ENCODE measurements at regions of chr15 and their contacts with region 1.

Region 1: DNA sequence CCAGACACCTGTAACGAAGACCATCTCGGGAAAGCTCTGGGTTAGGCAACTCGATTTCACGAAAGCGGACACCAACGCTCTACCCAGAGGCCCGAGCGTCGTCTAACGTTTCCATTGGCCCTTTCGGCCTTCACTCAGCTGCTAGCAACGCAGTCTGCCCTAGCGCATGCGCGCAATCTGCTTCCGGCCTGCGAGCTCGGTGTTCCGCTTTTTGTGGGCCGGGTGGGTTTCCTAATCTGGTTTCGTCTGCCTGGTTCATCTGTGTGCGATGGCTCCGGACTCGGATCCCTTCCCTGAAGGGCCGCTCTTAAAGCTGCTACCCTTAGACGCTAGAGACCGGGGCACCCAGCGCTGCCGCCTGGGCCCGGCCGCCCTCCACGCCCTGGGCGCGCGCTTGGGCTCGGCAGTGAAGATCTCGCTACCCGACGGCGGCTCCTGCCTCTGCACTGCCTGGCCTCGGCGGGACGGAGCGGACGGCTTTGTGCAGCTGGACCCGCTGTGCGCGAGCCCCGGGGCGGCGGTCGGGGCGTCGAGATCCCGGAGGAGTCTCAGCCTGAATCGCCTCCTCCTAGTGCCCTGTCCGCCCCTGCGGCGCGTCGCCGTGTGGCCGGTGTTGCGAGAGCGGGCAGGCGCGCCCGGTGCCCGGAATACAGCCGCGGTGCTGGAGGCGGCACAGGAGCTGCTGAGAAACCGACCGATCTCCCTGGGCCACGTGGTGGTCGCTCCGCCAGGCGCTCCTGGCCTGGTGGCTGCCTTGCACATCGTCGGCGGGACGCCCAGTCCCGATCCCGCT is 24.0 kb upstream of the GATM start:
- DNase-seq: peak; percentile 94 to 99 (median 96)
- ATAC-seq: peak; percentile 93
- H3K4me3 ChIP-seq: peak overlapping the region; percentile 48 to 75
- H3K4me3 Mint-ChIP-seq: peak overlapping the region; percentile 93
- H3K27ac ChIP-seq: peak overlapping the region; percentile 75 to 86
- H3K27ac Mint-ChIP-seq: peak overlapping the region; percentile 96
- H3K4me1 ChIP-seq: peaks cover 22% of the 10 kb centered on the region
- H3K4me1 Mint-ChIP-seq: peaks cover 42% of the 10 kb centered on the region
- H3K27me3 ChIP-seq: no peaks in the 10 kb centered on the region
- H3K27me3 Mint-ChIP-seq: no peaks in the 10 kb centered on the region
- CTCF ChIP-seq: no peak

Region 2: GRCh38 chr15:44426975-44427755 is 975.2 kb before region 1 on chr15 and contains the start of gene CTDSPL2:
- CTCF ChIA-PET with region 1: no interaction called
- POLR2A ChIA-PET with region 1: no interaction called
- intact Hi-C with region 1: loop called (anchors 10 kb)
- DNase-seq: peak; percentile 88 to 97 (median 93)
- ATAC-seq: peak; percentile 95
- H3K4me3 ChIP-seq: peak within 1 kb of the TSS; percentile 61 to 83
- H3K4me3 Mint-ChIP-seq: peak within 1 kb of the TSS; percentile 98
- H3K27ac ChIP-seq: peak within 1 kb of the TSS; percentile 86
- H3K27ac Mint-ChIP-seq: peak within 1 kb of the TSS; percentile 98
- H3K4me1 ChIP-seq: peaks cover 25% of the 10 kb centered on the region
- H3K4me1 Mint-ChIP-seq: peaks cover 46% of the 10 kb centered on the region
- H3K27me3 ChIP-seq: no peaks in the 10 kb centered on the region
- H3K27me3 Mint-ChIP-seq: no peaks in the 10 kb centered on the region
- CTCF ChIP-seq: no peak
- total RNA-seq, gene CTDSPL2: 103 to 104 TPM

Region 3: DNA sequence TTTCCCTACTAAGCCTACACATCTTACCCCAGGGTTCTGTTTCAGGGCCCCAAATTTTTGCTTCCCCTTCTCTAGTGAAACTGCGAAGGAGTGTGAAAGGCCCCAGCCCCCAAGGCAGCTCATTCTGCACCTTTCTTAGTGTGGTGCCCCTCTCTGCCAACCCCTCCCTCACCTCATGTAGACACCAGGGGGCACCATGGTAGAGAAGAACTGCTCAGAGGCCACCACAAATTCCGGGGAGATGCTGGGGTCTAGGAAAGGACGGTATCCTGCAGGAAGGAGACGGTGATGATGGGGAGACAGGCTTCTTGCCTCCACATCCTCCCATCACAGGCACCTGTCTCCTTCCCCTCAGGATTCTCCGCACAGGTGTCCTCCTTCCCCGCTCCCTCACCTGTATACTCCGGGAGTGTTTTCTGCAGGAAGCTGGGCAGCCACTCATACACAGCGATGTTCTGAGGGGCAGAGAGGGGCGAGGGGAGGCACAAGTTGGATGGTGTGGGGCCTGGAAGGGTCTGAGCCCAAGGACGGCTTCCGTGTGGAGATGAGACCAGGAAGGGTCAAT is 292.0 kb before region 1 on chr15:
- CTCF ChIA-PET with region 1: no interaction called
- POLR2A ChIA-PET with region 1: no interaction called
- intact Hi-C with region 1: no loop called
- DNase-seq: no peak
- ATAC-seq: no peak
- H3K4me3 ChIP-seq: no peak overlapping the region
- H3K4me3 Mint-ChIP-seq: no peak overlapping the region
- H3K27ac ChIP-seq: no peak overlapping the region
- H3K27ac Mint-ChIP-seq: no peak overlapping the region
- H3K4me1 ChIP-seq: peaks cover 31% of the 10 kb centered on the region
- H3K4me1 Mint-ChIP-seq: peaks cover 28% of the 10 kb centered on the region
- H3K27me3 ChIP-seq: peaks cover 22 to 27% of the 10 kb centered on the region in 2 experiments
- H3K27me3 Mint-ChIP-seq: peaks cover 62% of the 10 kb centered on the region
- CTCF ChIP-seq: no peak

Region 4: DNA sequence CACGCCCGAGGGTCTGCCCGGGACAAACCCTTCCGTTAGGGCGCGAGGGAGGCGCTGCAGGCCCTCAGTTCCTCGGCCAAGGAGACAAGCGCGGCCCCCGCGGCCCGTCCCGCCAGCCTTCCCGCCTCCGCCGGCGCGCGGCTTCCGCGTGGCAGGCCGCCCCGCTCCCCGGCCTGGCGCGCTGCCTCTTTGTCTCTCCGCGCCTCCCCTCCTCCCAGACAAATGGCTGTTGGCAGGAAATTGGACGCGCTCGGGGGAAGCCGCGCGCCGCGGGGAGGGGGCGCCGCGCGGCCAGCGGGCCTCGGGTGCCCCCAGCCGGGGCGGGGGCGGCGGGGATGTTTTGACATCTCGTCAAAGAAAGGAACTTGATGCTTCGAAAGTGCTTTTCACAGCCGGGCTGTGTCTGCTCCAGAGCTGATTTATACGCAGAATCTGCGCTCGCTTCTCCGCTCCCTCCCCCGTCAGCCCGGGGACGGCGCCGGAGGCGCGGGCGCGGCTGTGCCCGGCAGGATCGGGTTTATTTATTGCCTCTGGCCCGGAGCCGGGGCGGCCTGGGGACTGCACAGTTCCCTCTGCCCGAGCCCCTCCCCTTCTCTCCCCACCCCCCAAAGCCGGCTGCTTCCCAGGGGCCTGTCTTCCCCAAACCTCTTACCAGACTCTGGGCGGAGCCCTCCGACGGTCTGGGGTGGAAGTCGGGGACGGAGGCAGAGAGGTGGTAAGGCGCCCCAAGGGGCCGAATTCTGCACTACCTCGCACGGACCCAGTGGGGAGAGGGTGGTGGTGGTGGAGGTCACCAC is 235.3 kb before region 1 on chr15:
- CTCF ChIA-PET with region 1: interaction called, 52 read pairs
- POLR2A ChIA-PET with region 1: interaction called, 10 read pairs
- intact Hi-C with region 1: loop called (anchors 1 kb)
- DNase-seq: peak; percentile 64 to 90 (median 84)
- ATAC-seq: peak; percentile 90
- H3K4me3 ChIP-seq: peak overlapping the region; percentile 73 to 81
- H3K4me3 Mint-ChIP-seq: peak overlapping the region; percentile 81
- H3K27ac ChIP-seq: peak overlapping the region; percentile 86 to 87
- H3K27ac Mint-ChIP-seq: peak overlapping the region; percentile 87
- H3K4me1 ChIP-seq: peaks cover 17% of the 10 kb centered on the region
- H3K4me1 Mint-ChIP-seq: peaks cover 19% of the 10 kb centered on the region
- H3K27me3 ChIP-seq: no peaks in the 10 kb centered on the region
- H3K27me3 Mint-ChIP-seq: no peaks in the 10 kb centered on the region
- CTCF ChIP-seq: peak; percentile 47

Region 5: DNA sequence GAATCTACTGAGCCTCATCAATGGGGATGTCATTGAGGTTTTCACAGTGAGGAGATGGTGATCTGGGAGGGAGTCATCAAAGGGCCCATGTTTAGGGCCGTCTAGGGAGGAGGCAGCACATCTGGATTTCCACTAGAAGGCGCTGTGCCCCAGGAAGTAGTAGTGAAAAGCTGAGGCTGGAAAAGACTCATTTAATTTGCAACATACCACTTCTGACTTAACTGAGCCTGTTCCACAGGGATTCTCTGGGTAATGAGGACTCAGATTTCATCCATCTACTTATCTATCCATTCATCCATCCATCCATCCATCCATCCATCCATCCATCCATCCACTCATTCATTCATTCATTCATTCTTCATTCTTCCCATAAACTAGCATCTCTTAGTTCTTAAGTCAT is 197.2 kb before region 1 on chr15:
- CTCF ChIA-PET with region 1: interaction called, 17 read pairs
- POLR2A ChIA-PET with region 1: interaction called, 41 read pairs
- intact Hi-C with region 1: loop called (anchors 1 kb)
- DNase-seq: peak in 6 of 9 experiments; percentile 35 to 78 (median 61)
- ATAC-seq: peak; percentile 11
- H3K4me3 ChIP-seq: no peak overlapping the region
- H3K4me3 Mint-ChIP-seq: no peak overlapping the region
- H3K27ac ChIP-seq: no peak overlapping the region
- H3K27ac Mint-ChIP-seq: no peak overlapping the region
- H3K4me1 ChIP-seq: peaks cover 5% of the 10 kb centered on the region
- H3K4me1 Mint-ChIP-seq: no peaks in the 10 kb centered on the region
- H3K27me3 ChIP-seq: no peaks in the 10 kb centered on the region
- H3K27me3 Mint-ChIP-seq: peaks cover 12% of the 10 kb centered on the region
- CTCF ChIP-seq: peak; percentile 70

Region 6: GRCh38 chr15:45314960-45315359 is 87.4 kb before region 1 on chr15:
- CTCF ChIA-PET with region 1: no interaction called
- POLR2A ChIA-PET with region 1: no interaction called
- intact Hi-C with region 1: no loop called
- DNase-seq: peak in 1 of 9 experiments; percentile 10
- ATAC-seq: no peak
- H3K4me3 ChIP-seq: no peak overlapping the region
- H3K4me3 Mint-ChIP-seq: no peak overlapping the region
- H3K27ac ChIP-seq: no peak overlapping the region
- H3K27ac Mint-ChIP-seq: no peak overlapping the region
- H3K4me1 ChIP-seq: no peaks in the 10 kb centered on the region
- H3K4me1 Mint-ChIP-seq: no peaks in the 10 kb centered on the region
- H3K27me3 ChIP-seq: no peaks in the 10 kb centered on the region
- H3K27me3 Mint-ChIP-seq: peaks cover 13% of the 10 kb centered on the region
- CTCF ChIP-seq: no peak

Region 7: DNA sequence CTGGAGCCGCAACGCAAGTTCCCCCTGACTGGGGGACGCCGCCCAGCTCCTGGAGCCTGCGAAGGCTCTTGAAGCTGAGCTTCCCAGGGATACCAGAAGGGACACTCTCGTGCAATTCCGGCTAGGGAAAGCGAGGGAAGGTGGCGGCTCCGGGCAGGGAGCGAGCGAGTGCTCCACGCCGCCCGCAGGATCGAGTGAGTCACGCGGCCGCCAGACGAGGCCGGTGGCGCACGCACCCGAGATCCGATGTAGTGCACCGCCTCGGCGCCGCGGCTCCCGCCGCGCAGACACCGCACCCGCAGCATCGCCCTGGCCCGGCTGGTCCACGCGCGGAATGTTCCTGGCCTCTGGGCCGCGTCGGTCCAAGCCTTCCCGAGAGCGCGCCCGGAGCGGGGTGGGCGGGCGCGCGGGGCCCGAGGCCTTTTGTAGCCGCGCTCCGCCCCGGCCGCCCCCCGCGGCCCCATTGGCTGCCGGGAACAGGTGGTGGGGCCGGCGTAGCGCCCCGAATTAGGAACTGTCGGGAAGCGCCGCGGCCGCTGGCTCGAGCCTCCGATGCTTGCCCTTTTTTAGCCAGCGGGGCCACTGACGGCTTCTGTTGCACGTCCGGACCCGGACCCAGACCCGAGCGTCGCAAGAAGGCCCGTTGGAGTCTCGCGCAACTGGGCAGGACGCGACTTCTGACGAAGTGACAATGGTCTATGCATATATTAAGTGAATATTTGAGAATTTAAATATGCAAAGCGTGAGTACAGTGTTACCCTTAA is 24.0 kb before region 1 on chr15 and contains the start of gene GATM:
- CTCF ChIA-PET with region 1: interaction called, 14 read pairs
- POLR2A ChIA-PET with region 1: interaction called, 3 read pairs
- intact Hi-C with region 1: loop called in 1 of 2 experiments (anchors 1 kb)
- DNase-seq: peak in 8 of 9 experiments; percentile 12 to 70 (median 52)
- ATAC-seq: peak; percentile 78
- H3K4me3 ChIP-seq: peak within 1 kb of the TSS; percentile 47 to 79
- H3K4me3 Mint-ChIP-seq: peak within 1 kb of the TSS; percentile 85
- H3K27ac ChIP-seq: no peak within 1 kb of the TSS
- H3K27ac Mint-ChIP-seq: peak within 1 kb of the TSS; percentile 62
- H3K4me1 ChIP-seq: peaks cover 17% of the 10 kb centered on the region
- H3K4me1 Mint-ChIP-seq: peaks cover 23% of the 10 kb centered on the region
- H3K27me3 ChIP-seq: peaks cover 5 to 19% of the 10 kb centered on the region in 2 experiments
- H3K27me3 Mint-ChIP-seq: peaks cover 39% of the 10 kb centered on the region
- CTCF ChIP-seq: no peak
- total RNA-seq, gene GATM: 0.44 to 0.87 TPM

Region 8: GRCh38 chr15:45429974-45430792 is 27.8 kb after region 1 on chr15:
- CTCF ChIA-PET with region 1: interaction called, 7 read pairs
- POLR2A ChIA-PET with region 1: interaction called, 5 read pairs
- intact Hi-C with region 1: loop called in 1 of 2 experiments (anchors 2 kb)
- DNase-seq: peak; percentile 72 to 93 (median 87)
- ATAC-seq: peak; percentile 95
- H3K4me3 ChIP-seq: peak overlapping the region; percentile 43 to 45
- H3K4me3 Mint-ChIP-seq: peak overlapping the region; percentile 61
- H3K27ac ChIP-seq: no peak overlapping the region
- H3K27ac Mint-ChIP-seq: no peak overlapping the region
- H3K4me1 ChIP-seq: peaks cover 7% of the 10 kb centered on the region
- H3K4me1 Mint-ChIP-seq: peaks cover 3% of the 10 kb centered on the region
- H3K27me3 ChIP-seq: peaks cover 0 to 2% of the 10 kb centered on the region in 2 experiments
- H3K27me3 Mint-ChIP-seq: no peaks in the 10 kb centered on the region
- CTCF ChIP-seq: peak; percentile 100

Region 9: DNA sequence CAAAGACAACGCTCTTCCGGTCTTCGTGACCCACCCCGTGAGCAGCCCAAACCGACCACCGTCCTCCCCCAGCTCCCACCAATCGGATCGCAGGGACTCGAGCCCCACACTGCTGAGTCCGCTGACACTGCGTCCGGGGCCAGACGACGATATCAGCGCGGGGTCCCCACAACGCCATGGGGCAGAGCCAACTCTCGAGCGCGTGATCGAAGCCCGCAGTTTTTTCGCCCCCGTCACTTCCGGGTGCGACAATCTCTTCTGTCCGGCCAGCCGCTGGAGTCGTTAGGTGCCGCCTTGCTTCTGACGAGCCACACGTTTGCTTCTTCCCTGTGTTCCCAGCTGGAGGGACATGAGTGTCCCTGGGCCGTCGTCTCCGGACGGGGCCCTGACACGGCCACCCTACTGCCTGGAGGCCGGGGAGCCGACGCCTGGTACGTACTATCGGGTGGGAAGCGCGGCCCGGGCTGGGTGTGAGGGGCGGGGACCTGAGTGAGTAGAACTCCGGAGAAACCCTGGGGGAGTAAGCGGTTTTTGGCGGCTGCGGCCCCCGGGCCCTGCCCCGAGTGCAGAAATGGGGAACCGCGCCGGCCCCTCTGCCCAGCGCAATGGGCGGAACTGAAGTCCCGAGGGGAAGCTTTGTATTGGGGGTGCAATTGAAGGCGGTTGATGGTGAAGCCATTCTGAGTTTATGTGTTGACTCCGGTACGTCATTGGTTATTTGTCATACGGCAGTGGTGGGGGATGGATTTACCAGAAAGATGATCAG is 184.9 kb after region 1 on chr15 and contains the start of gene BLOC1S6:
- CTCF ChIA-PET with region 1: interaction called, 9 read pairs
- POLR2A ChIA-PET with region 1: interaction called, 32 read pairs
- intact Hi-C with region 1: loop called (anchors 1 kb)
- DNase-seq: peak; percentile 83 to 95 (median 90)
- ATAC-seq: peak; percentile 77
- H3K4me3 ChIP-seq: peak within 1 kb of the TSS; percentile 82 to 86
- H3K4me3 Mint-ChIP-seq: peak within 1 kb of the TSS; percentile 100
- H3K27ac ChIP-seq: peak within 1 kb of the TSS; percentile 93 to 98
- H3K27ac Mint-ChIP-seq: peak within 1 kb of the TSS; percentile 100
- H3K4me1 ChIP-seq: peaks cover 32% of the 10 kb centered on the region
- H3K4me1 Mint-ChIP-seq: peaks cover 50% of the 10 kb centered on the region
- H3K27me3 ChIP-seq: no peaks in the 10 kb centered on the region
- H3K27me3 Mint-ChIP-seq: no peaks in the 10 kb centered on the region
- CTCF ChIP-seq: no peak
- total RNA-seq, gene BLOC1S6: 78.1 to 78.9 TPM

Region 10: GRCh38 chr15:45763170-45763869 is 361.0 kb after region 1 on chr15:
- CTCF ChIA-PET with region 1: no interaction called
- POLR2A ChIA-PET with region 1: no interaction called
- intact Hi-C with region 1: no loop called
- DNase-seq: no peak
- ATAC-seq: no peak
- H3K4me3 ChIP-seq: no peak overlapping the region
- H3K4me3 Mint-ChIP-seq: no peak overlapping the region
- H3K27ac ChIP-seq: no peak overlapping the region
- H3K27ac Mint-ChIP-seq: no peak overlapping the region
- H3K4me1 ChIP-seq: no peaks in the 10 kb centered on the region
- H3K4me1 Mint-ChIP-seq: no peaks in the 10 kb centered on the region
- H3K27me3 ChIP-seq: no peaks in the 10 kb centered on the region
- H3K27me3 Mint-ChIP-seq: peaks cover 41% of the 10 kb centered on the region
- CTCF ChIP-seq: no peak

Measured in CD8-positive, alpha-beta T cell (primary cell).